Esophagus muscularis mucosa (tissue), 4 donors: ENCODE measurements at regions of chr7 and their contacts with region 1.

Region 1: GRCh38 chr7:124784879-124785818 is 19.6 kb upstream of the GPR37 start:
- DNase-seq: no peak
- H3K4me3 ChIP-seq: no peak overlapping the region
- H3K27ac ChIP-seq: no peak overlapping the region
- H3K4me1 ChIP-seq: peaks cover 0 to 5% (median 0%) of the 10 kb centered on the region in 4 donors
- H3K27me3 ChIP-seq: no peaks in the 10 kb centered on the region
- CTCF ChIP-seq: peak; percentile 75 to 86 (median 81)
- EP300 ChIP-seq: no peak
- POLR2A ChIP-seq: no peak

Region 2: DNA sequence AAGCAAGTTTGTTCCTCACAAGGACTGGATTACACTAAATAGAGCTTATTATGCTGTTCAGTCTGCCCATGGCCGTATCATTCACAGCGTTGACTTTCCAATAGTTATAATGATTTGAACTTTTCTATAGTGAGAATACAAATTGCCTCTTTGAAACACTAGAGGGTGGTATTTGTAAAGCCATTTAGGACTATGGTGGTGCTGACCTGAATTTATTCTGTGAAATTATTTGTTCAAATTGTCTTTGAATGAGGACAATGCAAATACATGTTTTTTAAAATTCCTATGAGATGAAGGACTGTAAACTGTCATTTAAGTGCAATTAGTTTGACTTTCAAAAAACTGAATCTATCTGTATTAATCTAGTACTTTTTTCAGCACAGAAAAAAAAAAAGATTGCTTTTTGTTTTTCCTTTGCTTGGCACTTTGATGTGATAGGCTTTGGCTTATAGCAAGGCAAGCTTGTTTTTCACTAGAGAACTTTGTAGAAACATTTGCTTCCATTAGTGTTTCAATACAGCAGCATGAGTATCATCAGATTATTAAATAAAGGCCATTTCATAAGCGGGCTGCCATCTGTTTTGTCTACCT is 629.6 kb before region 1 on chr7:
- intact Hi-C with region 1: loop called (anchors 5 kb)
- DNase-seq: no peak
- H3K4me3 ChIP-seq: no peak overlapping the region
- H3K27ac ChIP-seq: no peak overlapping the region
- H3K4me1 ChIP-seq: peaks cover 0 to 6% (median 0%) of the 10 kb centered on the region in 4 donors
- H3K27me3 ChIP-seq: no peaks in the 10 kb centered on the region
- CTCF ChIP-seq: peak; percentile 30 to 47 (median 42)
- EP300 ChIP-seq: no peak
- POLR2A ChIP-seq: no peak

Region 3: DNA sequence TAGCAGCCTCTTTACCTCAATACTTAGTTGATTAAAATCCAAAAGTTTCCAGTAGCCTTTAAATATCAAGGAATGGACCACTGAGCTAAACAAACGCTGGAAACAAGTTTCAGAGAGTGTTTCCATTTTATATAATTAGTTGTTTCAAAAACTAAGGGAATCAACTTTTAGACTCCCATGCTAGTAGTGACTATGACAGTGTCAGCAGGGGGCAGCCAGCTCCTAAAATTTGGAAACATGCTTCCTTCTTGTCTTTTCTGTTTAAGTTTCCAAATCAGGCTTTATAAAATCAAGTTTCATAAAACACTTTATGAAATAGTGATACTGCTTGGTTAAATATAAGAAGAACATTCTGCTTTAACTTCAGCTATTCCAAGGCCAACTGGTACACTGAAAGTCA is 614.1 kb before region 1 on chr7:
- intact Hi-C with region 1: loop called (anchors 2 kb)
- DNase-seq: no peak
- H3K4me3 ChIP-seq: no peak overlapping the region
- H3K27ac ChIP-seq: no peak overlapping the region
- H3K4me1 ChIP-seq: no peaks in the 10 kb centered on the region
- H3K27me3 ChIP-seq: no peaks in the 10 kb centered on the region
- CTCF ChIP-seq: peak; percentile 42 to 44 (median 44)
- EP300 ChIP-seq: no peak
- POLR2A ChIP-seq: no peak

Region 4: GRCh38 chr7:124635416-124635815 is 149.7 kb before region 1 on chr7:
- intact Hi-C with region 1: no loop called
- DNase-seq: no peak
- H3K4me3 ChIP-seq: no peak overlapping the region
- H3K27ac ChIP-seq: no peak overlapping the region
- H3K4me1 ChIP-seq: no peaks in the 10 kb centered on the region
- H3K27me3 ChIP-seq: no peaks in the 10 kb centered on the region
- CTCF ChIP-seq: no peak
- EP300 ChIP-seq: no peak
- POLR2A ChIP-seq: no peak

Region 5: GRCh38 chr7:124856299-124856888 is 71.2 kb after region 1 on chr7:
- intact Hi-C with region 1: no loop called
- DNase-seq: no peak
- H3K4me3 ChIP-seq: no peak overlapping the region
- H3K27ac ChIP-seq: no peak overlapping the region
- H3K4me1 ChIP-seq: no peaks in the 10 kb centered on the region
- H3K27me3 ChIP-seq: no peaks in the 10 kb centered on the region
- CTCF ChIP-seq: peak; percentile 40 to 62 (median 56)
- EP300 ChIP-seq: no peak
- POLR2A ChIP-seq: no peak